ENCODE measurements at regions of chr1 and their contacts with region 1.

Region 1: GRCh38 chr1:40709100-40709801 is 17.7 kb downstream of the NFYC start:
- DNase-seq: peak; percentile 75
- H3K4me3 Mint-ChIP-seq: peak overlapping the region; percentile 89
- H3K27ac Mint-ChIP-seq: peak overlapping the region; percentile 93
- H3K4me1 Mint-ChIP-seq: peaks cover 54% of the 10 kb centered on the region
- H3K27me3 Mint-ChIP-seq: no peaks in the 10 kb centered on the region

Region 2: DNA sequence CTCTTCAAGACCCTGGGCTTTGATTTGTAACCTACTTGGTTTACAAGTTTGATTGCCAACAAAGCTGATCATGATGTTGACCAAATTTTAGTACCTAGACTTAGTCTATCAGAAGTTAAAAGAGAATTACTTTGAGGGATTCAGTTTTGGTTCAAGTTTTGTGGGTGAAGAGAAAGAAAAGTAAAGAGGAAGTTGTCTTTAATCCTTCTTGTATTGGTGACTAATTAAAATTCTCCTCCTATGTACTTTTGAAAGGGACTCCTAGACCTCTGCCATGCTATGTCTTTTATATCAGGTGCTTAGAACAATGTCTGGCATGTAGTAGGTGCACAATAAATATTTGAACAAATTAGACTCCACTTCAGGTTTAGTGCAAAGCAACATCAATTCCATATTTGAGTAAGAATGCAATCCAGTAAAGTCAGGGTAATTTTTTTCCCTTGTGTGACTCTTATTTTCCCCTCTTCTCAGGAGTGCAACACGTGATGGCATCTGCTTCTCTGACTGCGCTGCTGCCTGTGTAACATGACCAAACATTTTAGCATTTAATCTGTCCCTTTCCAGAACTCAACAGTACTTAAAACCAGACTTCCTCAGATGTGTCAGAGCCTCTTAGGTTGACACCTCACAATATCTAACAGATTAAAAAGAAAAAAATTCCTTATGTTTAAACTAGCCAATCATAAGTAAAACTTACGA is 33.3 kb after region 1 on chr1:
- intact Hi-C with region 1: loop called (anchors 5 kb)
- DNase-seq: no peak
- H3K4me3 Mint-ChIP-seq: no peak overlapping the region
- H3K27ac Mint-ChIP-seq: peak overlapping the region; percentile 76
- H3K4me1 Mint-ChIP-seq: peaks cover 34% of the 10 kb centered on the region
- H3K27me3 Mint-ChIP-seq: no peaks in the 10 kb centered on the region

Measured in activated T-helper 2 cell treated with anti-CD3 and anti-CD28 coated beads, Interferon-gamma antibody, Interleukin-2, Interleukin-4, amounts not matched to agents 10 μg/mL and 5 μg/mL and 100 μg/mL, durations not matched to agents 14 hours and 24 hours and 36 hours (primary cell).